ENCODE measurements at regions of chr7 and their contacts with region 1.

Region 1: DNA sequence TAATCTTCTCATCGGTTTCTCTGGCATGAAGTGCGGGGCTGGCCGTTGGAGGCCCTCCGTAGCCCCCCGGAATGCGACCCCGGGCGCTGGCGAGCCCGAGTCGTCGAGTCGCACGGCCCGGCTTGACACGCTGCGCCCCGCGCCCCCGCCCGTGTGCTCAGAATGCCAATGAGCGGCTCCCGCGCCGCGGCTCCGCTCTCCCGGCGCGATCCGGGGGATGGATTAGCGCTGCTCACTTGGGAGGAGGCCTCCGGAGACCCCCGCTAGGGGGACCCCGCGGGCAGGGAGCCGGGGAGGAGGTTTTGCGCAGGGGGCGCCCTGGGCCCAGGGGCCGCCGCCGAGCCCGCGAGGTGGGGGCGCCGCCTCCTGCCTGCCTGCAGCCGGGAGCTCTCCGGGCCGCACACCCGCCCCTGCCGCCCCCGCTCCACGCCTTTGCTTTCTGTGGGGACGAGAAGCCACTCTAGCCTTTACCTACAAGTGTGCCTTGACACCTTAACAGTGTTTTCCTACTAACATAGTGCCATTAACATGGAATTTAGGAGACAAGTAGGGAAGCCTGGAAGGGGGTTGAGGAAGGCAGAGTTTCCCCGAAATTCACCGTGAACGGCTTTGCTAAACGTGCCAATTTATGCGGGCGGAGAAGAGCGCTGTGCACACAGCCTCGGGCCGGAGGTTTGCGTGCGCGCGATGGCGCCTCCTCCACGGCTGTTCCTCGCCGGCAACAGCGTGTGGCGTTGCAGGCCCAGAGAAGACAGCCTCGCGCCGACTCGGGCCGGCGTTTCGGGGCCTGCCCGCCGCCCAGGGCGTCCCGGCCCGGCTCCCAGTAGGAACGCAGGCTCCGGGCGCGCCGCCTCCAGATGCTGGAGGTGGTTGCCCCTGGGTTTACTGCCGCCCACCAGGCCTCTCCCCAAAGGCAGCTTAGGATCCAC is 7.1 kb downstream of the SHH start:
- DNase-seq: peak; percentile 83 to 91
- ATAC-seq: peak; percentile 67 to 83
- H3K4me3 ChIP-seq: peak overlapping the region; percentile 51
- H3K27ac ChIP-seq: peak overlapping the region; percentile 80 to 85
- H3K4me1 ChIP-seq: peaks cover 32% of the 10 kb centered on the region
- CTCF ChIP-seq: peak; percentile 86
- EP300 ChIP-seq: no peak
- POLR2A ChIP-seq: no peak
- RAD21 ChIP-seq: peak; percentile 68 to 78

Region 2: GRCh38 chr7:156156734-156157610 is 351.8 kb after region 1 on chr7:
- CTCF ChIA-PET with region 1: interaction called, 10 read pairs
- POLR2A ChIA-PET with region 1: no interaction called
- DNase-seq: peak; percentile 66 to 72
- ATAC-seq: peak; percentile 85 to 96
- H3K4me3 ChIP-seq: no peak overlapping the region
- H3K27ac ChIP-seq: peak overlapping the region; percentile 47 to 80; a peak in 4 of 6 replicates
- H3K4me1 ChIP-seq: peaks cover 14% of the 10 kb centered on the region
- CTCF ChIP-seq: peak; percentile 57
- EP300 ChIP-seq: no peak
- POLR2A ChIP-seq: no peak
- RAD21 ChIP-seq: peak; percentile 73 to 79

Region 3: GRCh38 chr7:156232931-156233705 is 428.0 kb after region 1 on chr7:
- CTCF ChIA-PET with region 1: no interaction called
- POLR2A ChIA-PET with region 1: no interaction called
- DNase-seq: no peak
- ATAC-seq: no peak
- H3K4me3 ChIP-seq: no peak overlapping the region
- H3K27ac ChIP-seq: no peak overlapping the region
- H3K4me1 ChIP-seq: no peaks in the 10 kb centered on the region
- CTCF ChIP-seq: no peak
- EP300 ChIP-seq: no peak
- POLR2A ChIP-seq: no peak
- RAD21 ChIP-seq: no peak

Region 4: GRCh38 chr7:156466272-156466671 is 661.1 kb after region 1 on chr7:
- CTCF ChIA-PET with region 1: interaction called, 67 read pairs
- POLR2A ChIA-PET with region 1: no interaction called
- DNase-seq: no peak
- ATAC-seq: no peak
- H3K4me3 ChIP-seq: no peak overlapping the region
- H3K27ac ChIP-seq: no peak overlapping the region
- H3K4me1 ChIP-seq: no peaks in the 10 kb centered on the region
- CTCF ChIP-seq: no peak
- EP300 ChIP-seq: no peak
- POLR2A ChIP-seq: no peak
- RAD21 ChIP-seq: no peak

Region 5: GRCh38 chr7:156473476-156474240 is 668.5 kb after region 1 on chr7:
- CTCF ChIA-PET with region 1: interaction called, 67 read pairs
- POLR2A ChIA-PET with region 1: no interaction called
- DNase-seq: peak; percentile 53 to 59
- ATAC-seq: peak; percentile 84 to 87
- H3K4me3 ChIP-seq: no peak overlapping the region
- H3K27ac ChIP-seq: no peak overlapping the region
- H3K4me1 ChIP-seq: peaks cover 20% of the 10 kb centered on the region
- CTCF ChIP-seq: peak; percentile 89
- EP300 ChIP-seq: no peak
- POLR2A ChIP-seq: no peak
- RAD21 ChIP-seq: peak; percentile 82 to 87